Caco-2 (cell line): ENCODE measurements at regions of chr7 and their contacts with region 1.

Region 1: GRCh38 chr7:43071604-43072003 is 40.8 kb upstream of the HECW1 start:
- DNase-seq: peak in 1 of 2 experiments; percentile 21
- H3K4me3 ChIP-seq: no peak overlapping the region
- H3K4me3 Mint-ChIP-seq: peak overlapping the region; percentile 45
- H3K27ac Mint-ChIP-seq: peak overlapping the region; percentile 71
- H3K4me1 ChIP-seq: peaks cover 19% of the 10 kb centered on the region
- H3K4me1 Mint-ChIP-seq: peaks cover 13% of the 10 kb centered on the region
- H3K27me3 ChIP-seq: no peaks in the 10 kb centered on the region; the same call in 1 of the 2 replicates
- H3K27me3 Mint-ChIP-seq: peaks cover 3% of the 10 kb centered on the region
- CTCF ChIP-seq: peak in 1 of 2 experiments; percentile 44

Region 2: GRCh38 chr7:43058271-43059066 is 13.1 kb before region 1 on chr7:
- CTCF ChIA-PET with region 1: no interaction called
- POLR2A ChIA-PET with region 1: no interaction called
- intact Hi-C with region 1: loop called (anchors 2 kb)
- DNase-seq: no peak
- H3K4me3 ChIP-seq: no peak overlapping the region
- H3K4me3 Mint-ChIP-seq: no peak overlapping the region
- H3K27ac Mint-ChIP-seq: no peak overlapping the region
- H3K4me1 ChIP-seq: no peaks in the 10 kb centered on the region
- H3K4me1 Mint-ChIP-seq: no peaks in the 10 kb centered on the region
- H3K27me3 ChIP-seq: no peaks in the 10 kb centered on the region
- H3K27me3 Mint-ChIP-seq: peaks cover 2% of the 10 kb centered on the region
- CTCF ChIP-seq: no peak